IMR-90 (cell line): ENCODE measurements at regions of chr15 and their contacts with region 1.

Region 1: DNA sequence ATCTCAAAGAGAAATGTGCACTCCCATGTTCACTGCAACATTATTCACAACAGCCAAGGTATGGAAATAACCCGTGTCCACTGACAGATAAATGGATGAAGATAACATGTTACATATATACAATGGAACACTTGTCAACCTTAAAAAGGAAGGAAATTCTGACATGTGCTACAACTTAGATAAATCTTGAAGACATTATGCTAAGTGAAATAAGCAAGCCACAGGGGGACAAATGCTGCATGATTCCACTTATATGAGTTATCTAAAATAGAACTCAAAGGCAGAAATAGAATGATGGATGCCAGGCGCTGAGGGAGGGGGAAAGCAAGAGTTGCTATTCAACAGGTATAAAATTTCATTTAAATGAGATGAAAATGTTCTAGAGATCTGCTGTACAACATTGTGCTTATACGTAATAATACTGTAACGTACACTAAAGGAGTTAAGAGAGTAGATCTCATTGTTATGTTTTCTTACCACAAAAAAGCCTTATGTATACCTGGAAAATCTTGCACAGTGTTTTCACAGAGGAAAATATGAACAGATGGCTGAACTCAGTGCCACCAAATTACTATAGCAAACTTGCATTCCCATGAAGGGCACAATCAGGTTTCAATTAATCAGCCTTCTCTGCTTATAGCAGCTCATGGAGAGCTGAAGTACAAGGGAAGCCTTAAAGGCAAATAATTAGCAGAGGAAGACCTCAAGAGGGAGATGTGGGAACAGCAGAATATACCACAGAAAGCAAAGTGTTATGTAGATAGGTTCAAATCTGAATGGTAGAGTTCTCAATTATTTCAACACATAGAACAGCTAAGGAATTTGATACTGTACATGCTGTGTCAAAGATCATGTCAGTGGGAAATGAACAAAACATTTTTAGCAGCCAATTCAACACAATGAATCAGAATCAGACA is 8.1 kb upstream of the VPS39 start:
- DNase-seq: no peak
- ATAC-seq: peak; percentile 32; the same call in 1 of the 2 replicates
- H3K4me3 ChIP-seq: no peak overlapping the region
- H3K27ac ChIP-seq: no peak overlapping the region
- H3K4me1 ChIP-seq: no peaks in the 10 kb centered on the region
- H3K27me3 ChIP-seq: no peaks in the 10 kb centered on the region
- CTCF ChIP-seq: no peak
- POLR2A ChIP-seq: no peak
- RAD21 ChIP-seq: no peak

Region 2: GRCh38 chr15:42157981-42158765 is 58.0 kb before region 1 on chr15:
- CTCF ChIA-PET with region 1: no interaction called
- POLR2A ChIA-PET with region 1: no interaction called
- dilution Hi-C with region 1: no loop called
- in situ Hi-C with region 1: no loop called
- intact Hi-C with region 1: no loop called
- DNase-seq: peak; percentile 80
- ATAC-seq: peak; percentile 67
- H3K4me3 ChIP-seq: no peak overlapping the region
- H3K27ac ChIP-seq: no peak overlapping the region
- H3K4me1 ChIP-seq: peaks cover 4% of the 10 kb centered on the region; the same call in 1 of the 2 replicates
- H3K27me3 ChIP-seq: no peaks in the 10 kb centered on the region; the same call in 1 of the 2 replicates
- CTCF ChIP-seq: no peak
- POLR2A ChIP-seq: no peak
- RAD21 ChIP-seq: no peak

Region 3: DNA sequence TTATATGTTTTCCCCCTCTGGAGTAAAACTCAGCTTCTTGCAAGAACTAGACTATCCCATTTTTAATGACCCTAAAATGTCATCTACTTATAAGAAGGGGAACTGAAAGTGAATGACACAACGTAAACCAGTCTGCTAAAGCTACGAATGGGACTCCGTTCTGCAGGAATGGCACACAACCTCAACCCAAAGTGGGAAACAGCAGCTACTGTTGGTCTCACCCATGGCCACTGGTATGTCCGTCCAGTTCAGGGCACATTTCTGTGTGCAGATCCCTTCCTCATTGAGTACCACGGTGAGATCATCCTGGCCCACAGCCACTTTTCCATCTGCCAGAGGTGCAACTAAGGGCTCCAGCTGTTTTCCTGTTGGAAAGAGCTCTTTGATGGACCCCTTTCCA is 31.9 kb before region 1 on chr15:
- CTCF ChIA-PET with region 1: no interaction called
- POLR2A ChIA-PET with region 1: no interaction called
- dilution Hi-C with region 1: no loop called
- in situ Hi-C with region 1: no loop called
- intact Hi-C with region 1: loop called (anchors 5 kb)
- DNase-seq: peak; percentile 17
- ATAC-seq: peak; percentile 17; the same call in 1 of the 2 replicates
- H3K4me3 ChIP-seq: no peak overlapping the region
- H3K27ac ChIP-seq: no peak overlapping the region
- H3K4me1 ChIP-seq: peaks cover 2% of the 10 kb centered on the region; the same call in 1 of the 2 replicates
- H3K27me3 ChIP-seq: no peaks in the 10 kb centered on the region
- CTCF ChIP-seq: no peak
- POLR2A ChIP-seq: no peak
- RAD21 ChIP-seq: no peak

Region 4: DNA sequence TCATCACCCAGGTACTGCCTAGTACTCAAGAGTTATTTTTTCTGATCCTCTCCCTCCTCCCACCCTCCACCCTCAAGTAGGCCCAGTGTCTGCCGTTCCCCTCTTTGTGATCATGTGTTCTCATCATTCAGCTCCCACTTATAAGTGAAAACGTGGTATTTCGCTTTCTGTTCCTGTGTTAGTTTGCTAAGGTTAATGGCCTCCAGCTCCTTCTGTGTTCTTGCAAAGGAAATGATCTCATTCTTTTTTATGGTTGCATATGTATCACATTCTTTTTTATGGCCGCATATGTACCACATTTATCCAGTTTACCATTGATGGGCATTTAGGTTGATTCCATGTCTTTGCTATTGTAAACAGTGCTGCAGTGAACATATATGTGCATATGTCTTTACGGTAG is 48.6 kb after region 1 on chr15:
- CTCF ChIA-PET with region 1: no interaction called
- POLR2A ChIA-PET with region 1: no interaction called
- dilution Hi-C with region 1: no loop called
- in situ Hi-C with region 1: no loop called
- intact Hi-C with region 1: loop called (anchors 10 kb)
- DNase-seq: no peak
- ATAC-seq: no peak
- H3K4me3 ChIP-seq: no peak overlapping the region
- H3K27ac ChIP-seq: no peak overlapping the region
- H3K4me1 ChIP-seq: no peaks in the 10 kb centered on the region
- H3K27me3 ChIP-seq: no peaks in the 10 kb centered on the region
- CTCF ChIP-seq: no peak
- POLR2A ChIP-seq: no peak
- RAD21 ChIP-seq: no peak